ENCODE measurements at regions of chr3 and their contacts with region 1.

Region 1: DNA sequence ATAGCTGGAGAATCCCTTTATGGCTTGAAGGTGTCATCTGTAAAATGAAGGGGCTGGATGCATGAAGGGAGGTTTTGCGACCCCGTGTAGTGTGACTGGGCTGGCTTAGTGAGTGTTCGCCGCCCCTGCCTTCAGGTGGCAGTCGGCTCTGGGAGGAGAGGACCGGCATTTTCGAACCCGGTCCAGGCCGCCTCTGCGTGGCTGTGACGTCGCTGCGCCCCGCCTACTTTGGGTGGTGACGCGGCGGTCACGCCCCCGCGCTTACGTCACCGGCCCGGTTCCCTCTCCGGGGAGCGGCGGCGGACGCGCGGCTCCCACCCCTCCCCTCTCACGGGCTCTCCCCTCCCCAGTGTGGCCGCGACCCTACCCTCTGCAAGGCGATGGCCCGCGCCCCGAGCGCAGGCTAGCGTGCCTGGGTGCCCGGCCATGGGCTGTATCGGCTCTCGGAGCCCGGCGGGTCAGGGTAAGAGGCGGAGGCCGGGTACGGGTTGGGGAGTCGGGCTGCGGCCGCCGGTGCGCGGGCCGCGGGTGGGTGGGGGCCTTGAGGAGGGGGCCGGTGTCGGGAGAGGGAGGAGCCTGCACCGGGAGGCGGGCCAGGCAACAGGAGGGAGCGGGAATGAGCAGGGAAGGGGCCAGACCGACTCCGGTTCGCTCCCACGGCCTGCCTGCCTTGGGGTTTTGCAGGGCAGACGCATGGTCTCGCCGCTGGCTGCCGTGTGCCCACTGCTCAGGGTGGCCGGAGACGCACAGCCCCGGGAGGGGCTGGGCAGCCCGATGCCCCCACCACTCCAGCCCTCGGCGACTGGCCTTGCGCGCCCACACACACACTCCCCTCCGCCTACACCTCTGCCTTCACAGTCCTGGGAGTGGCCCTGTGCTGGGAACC is 1.5 kb upstream of the FAM131A start:
- DNase-seq: peak; percentile 89
- H3K4me3 Mint-ChIP-seq: peak overlapping the region; percentile 81
- H3K27ac Mint-ChIP-seq: peak overlapping the region; percentile 88
- H3K4me1 Mint-ChIP-seq: peaks cover 54% of the 10 kb centered on the region
- H3K27me3 Mint-ChIP-seq: no peaks in the 10 kb centered on the region

Region 2: GRCh38 chr3:184314363-184314699 is 21.6 kb before region 1 on chr3 and contains the start of gene EIF4G1:
- CTCF ChIA-PET with region 1: no interaction called
- POLR2A ChIA-PET with region 1: interaction called, 3 read pairs
- intact Hi-C with region 1: loop called (anchors 1 kb)
- DNase-seq: peak; percentile 95
- H3K4me3 Mint-ChIP-seq: peak within 1 kb of the TSS; percentile 86
- H3K27ac Mint-ChIP-seq: peak within 1 kb of the TSS; percentile 93
- H3K4me1 Mint-ChIP-seq: peaks cover 29% of the 10 kb centered on the region
- H3K27me3 Mint-ChIP-seq: no peaks in the 10 kb centered on the region
- total RNA-seq, gene EIF4G1: 410 to 432 TPM

Region 3: DNA sequence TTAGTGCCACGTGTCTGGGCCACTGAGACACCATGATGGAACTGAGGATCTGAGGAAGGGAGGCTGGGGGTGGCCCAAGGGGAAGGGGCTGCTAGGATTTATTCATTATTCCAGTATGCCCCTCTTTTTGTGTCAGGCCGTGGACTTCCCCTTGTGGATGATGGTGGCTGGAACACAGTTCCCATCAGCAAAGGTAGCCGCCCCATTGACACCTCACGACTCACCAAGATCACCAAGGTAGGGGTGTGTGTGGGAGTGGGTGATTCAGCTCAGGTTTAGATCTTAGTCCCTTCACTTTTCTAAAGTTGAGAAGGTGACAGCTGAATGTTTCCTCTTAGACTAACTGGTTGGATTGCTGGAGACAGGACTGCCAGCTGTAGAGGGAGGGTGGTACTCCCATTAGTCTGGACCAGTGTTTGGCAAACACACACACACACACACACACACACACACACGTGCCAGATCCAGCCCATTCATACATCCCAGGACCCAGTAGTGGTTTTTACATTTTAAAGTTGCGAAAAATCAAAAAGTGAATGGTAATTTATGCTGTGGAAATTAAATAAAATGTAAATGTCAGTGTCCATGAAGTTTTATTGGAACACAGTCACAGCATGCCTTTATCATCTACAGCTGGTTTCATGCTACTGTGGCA is 10.1 kb before region 1 on chr3:
- CTCF ChIA-PET with region 1: no interaction called
- POLR2A ChIA-PET with region 1: interaction called, 10 read pairs
- intact Hi-C with region 1: loop called (anchors 1 kb)
- DNase-seq: peak; percentile 65
- H3K4me3 Mint-ChIP-seq: no peak overlapping the region
- H3K27ac Mint-ChIP-seq: peak overlapping the region; percentile 69
- H3K4me1 Mint-ChIP-seq: peaks cover 25% of the 10 kb centered on the region
- H3K27me3 Mint-ChIP-seq: no peaks in the 10 kb centered on the region

Region 4: GRCh38 chr3:184354121-184354728 is 18.3 kb after region 1 on chr3:
- CTCF ChIA-PET with region 1: interaction called, 23 read pairs
- POLR2A ChIA-PET with region 1: no interaction called
- intact Hi-C with region 1: no loop called
- DNase-seq: peak; percentile 74
- H3K4me3 Mint-ChIP-seq: no peak overlapping the region
- H3K27ac Mint-ChIP-seq: no peak overlapping the region
- H3K4me1 Mint-ChIP-seq: no peaks in the 10 kb centered on the region
- H3K27me3 Mint-ChIP-seq: no peaks in the 10 kb centered on the region

Region 5: DNA sequence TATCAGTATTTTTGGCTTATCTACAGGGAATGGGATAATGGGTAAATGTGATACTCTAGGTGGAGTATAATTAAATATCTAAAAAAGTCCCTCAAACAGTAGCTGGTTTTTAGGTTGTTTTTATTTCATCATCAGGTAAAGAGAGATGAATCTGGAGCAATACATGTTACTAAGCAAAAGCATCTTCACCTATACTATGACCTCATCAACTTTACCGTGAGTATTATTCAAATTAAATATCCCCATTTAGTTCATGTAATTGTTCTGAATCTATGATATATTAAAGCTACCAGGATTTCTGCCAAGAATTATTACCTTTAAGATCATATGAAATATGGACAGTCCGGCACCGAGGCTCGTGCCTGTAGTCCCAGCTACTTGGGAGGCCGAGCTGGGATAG is 523.9 kb after region 1 on chr3:
- CTCF ChIA-PET with region 1: no interaction called
- POLR2A ChIA-PET with region 1: no interaction called
- intact Hi-C with region 1: no loop called
- DNase-seq: no peak
- H3K4me3 Mint-ChIP-seq: no peak overlapping the region
- H3K27ac Mint-ChIP-seq: no peak overlapping the region
- H3K4me1 Mint-ChIP-seq: no peaks in the 10 kb centered on the region
- H3K27me3 Mint-ChIP-seq: no peaks in the 10 kb centered on the region